Right ventricle myocardium inferior (tissue), 1 donor: ENCODE measurements at regions of chr9 and their contacts with region 1.

Region 1: GRCh38 chr9:132406554-132407122 is at the start of gene TTF1:
- DNase-seq: peak; percentile 95
- ATAC-seq: peak; percentile 77
- total RNA-seq, gene TTF1: 17.2 TPM

Region 2: GRCh38 chr9:132354637-132355355 is 51.8 kb before region 1 on chr9 and contains the start of gene SETX:
- intact Hi-C with region 1: loop called (anchors 1 kb)
- DNase-seq: peak; percentile 99
- ATAC-seq: peak; percentile 99
- total RNA-seq, gene SETX: 20.5 TPM

Region 3: GRCh38 chr9:132383462-132383883 is 23.2 kb before region 1 on chr9:
- intact Hi-C with region 1: no loop called
- DNase-seq: no peak
- ATAC-seq: no peak

Region 4: GRCh38 chr9:132507746-132508469 is 101.3 kb after region 1 on chr9:
- intact Hi-C with region 1: loop called (anchors 5 kb)
- DNase-seq: no peak
- ATAC-seq: peak; percentile 61